Esophagus muscularis mucosa (tissue), 4 donors: ENCODE measurements at regions of chr14 and their contacts with region 1.

Region 1: GRCh38 chr14:100375963-100376735 is 53.0 kb downstream of the SLC25A47 start:
- DNase-seq: peak; percentile 98
- H3K4me3 ChIP-seq: peak within 1 kb of the TSS; percentile 68 to 81 (median 78)
- H3K27ac ChIP-seq: peak within 1 kb of the TSS; percentile 89 to 93 (median 90)
- H3K4me1 ChIP-seq: peaks cover 15 to 46% (median 37%) of the 10 kb centered on the region in 4 donors
- H3K27me3 ChIP-seq: no peaks in the 10 kb centered on the region
- CTCF ChIP-seq: peak in 1 of 3 experiments; percentile 33
- EP300 ChIP-seq: no peak
- POLR2A ChIP-seq: peak; percentile 43

Region 2: DNA sequence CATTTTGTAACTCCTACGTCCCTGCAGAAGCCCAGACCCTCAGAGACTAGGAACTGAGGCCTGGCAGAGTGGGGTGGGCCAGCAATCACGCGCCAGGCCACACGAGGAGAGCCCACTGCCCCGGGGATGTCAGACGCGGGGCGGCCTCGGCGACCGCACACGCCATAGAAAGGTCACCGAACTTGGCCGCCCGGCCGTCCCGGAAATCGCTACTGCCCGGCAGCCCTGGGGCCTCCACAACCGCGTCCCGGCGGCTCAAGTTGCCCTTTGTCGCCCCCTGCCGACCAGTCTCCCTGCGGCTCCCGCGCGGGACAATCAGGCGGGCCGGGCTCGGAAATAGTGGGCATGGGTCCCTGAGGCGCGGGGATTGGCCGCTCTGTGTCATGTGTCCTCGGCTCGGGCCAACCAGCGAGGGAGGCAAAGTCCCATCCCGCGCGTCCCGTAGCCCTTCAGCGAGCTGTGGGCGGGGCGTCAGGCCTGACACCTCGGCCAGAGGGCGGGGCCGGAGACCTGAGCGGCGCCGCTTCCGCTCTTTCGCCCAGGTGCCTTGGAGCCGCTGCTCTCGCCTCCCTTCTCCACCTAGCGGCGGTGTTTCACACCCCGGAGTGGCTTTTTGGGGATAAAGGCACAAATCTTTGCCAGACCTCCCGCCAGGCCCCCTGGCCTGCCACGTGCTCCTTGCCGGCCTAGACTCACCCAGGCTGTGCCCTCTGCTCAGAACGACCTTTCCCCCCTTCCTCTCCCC is 183.3 kb before region 1 on chr14:
- intact Hi-C with region 1: loop called (anchors 2 kb)
- DNase-seq: peak; percentile 100
- H3K4me3 ChIP-seq: peak overlapping the region; percentile 51 to 58 (median 53)
- H3K27ac ChIP-seq: peak overlapping the region; percentile 87 to 95 (median 90)
- H3K4me1 ChIP-seq: peaks cover 14 to 21% (median 19%) of the 10 kb centered on the region in 4 donors
- H3K27me3 ChIP-seq: no peaks in the 10 kb centered on the region
- CTCF ChIP-seq: peak; percentile 86 to 93 (median 87)
- EP300 ChIP-seq: no peak
- POLR2A ChIP-seq: peak; percentile 39

Region 3: DNA sequence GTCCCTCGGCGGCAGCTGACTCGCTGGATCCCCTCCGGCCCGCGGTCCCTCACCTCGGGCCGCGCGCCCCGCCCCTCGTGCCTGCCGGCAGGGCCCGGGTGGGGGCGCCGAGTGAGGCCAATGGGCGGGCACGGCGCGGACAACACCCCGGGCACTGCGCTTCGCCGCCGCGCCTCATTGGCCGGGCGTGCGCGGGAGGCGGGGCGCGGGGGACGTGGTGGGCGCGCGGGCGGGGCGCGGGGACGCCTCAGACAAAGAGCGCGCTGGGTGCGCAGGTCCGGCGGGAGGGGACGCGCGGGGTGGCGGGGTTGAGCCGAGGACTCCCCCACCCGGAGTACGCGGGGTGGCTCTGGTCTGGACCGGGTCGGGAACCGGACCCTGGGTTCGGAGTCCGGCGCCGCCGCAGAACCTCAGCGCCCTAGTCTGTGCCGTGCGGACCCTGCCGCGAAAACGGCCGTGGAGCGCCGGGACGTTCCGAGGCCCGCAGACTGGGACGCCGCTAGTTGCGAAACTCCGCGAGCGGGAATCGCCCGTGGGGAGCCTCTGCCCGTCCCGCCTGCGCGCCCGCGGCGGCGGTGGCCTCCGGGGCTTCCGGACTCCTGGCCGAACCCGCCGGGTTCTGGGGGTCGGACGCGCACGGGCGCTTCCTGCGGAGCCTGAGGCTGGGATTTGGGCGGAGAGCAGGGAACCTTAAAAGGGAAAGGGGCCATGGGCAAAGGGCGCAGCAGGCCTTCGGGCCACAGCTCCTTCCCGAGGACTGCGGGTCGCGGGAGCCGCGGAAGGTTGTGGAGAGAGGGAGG is 69.5 kb before region 1 on chr14 and contains the start of gene SLC25A29:
- intact Hi-C with region 1: loop called (anchors 5 kb)
- DNase-seq: peak; percentile 95
- H3K4me3 ChIP-seq: peak within 1 kb of the TSS; percentile 82 to 98 (median 88)
- H3K27ac ChIP-seq: peak within 1 kb of the TSS; percentile 89 to 93 (median 89)
- H3K4me1 ChIP-seq: peaks cover 31 to 73% (median 66%) of the 10 kb centered on the region in 4 donors
- H3K27me3 ChIP-seq: no peaks in the 10 kb centered on the region
- CTCF ChIP-seq: no peak
- EP300 ChIP-seq: no peak
- POLR2A ChIP-seq: peak; percentile 52
- total RNA-seq, gene SLC25A29: 37.4 to 63.0 (median 49.2) TPM

Region 4: GRCh38 chr14:100654814-100655740 is 278.9 kb after region 1 on chr14:
- intact Hi-C with region 1: no loop called
- DNase-seq: no peak
- H3K4me3 ChIP-seq: peak overlapping the region in 2 of 4 donors; percentile 23 to 32
- H3K27ac ChIP-seq: no peak overlapping the region
- H3K4me1 ChIP-seq: peaks cover 0 to 8% (median 6%) of the 10 kb centered on the region in 4 donors
- H3K27me3 ChIP-seq: peaks cover 0 to 40% (median 12%) of the 10 kb centered on the region in 4 donors
- CTCF ChIP-seq: peak; percentile 38 to 67 (median 43)
- EP300 ChIP-seq: no peak
- POLR2A ChIP-seq: no peak

Region 5: DNA sequence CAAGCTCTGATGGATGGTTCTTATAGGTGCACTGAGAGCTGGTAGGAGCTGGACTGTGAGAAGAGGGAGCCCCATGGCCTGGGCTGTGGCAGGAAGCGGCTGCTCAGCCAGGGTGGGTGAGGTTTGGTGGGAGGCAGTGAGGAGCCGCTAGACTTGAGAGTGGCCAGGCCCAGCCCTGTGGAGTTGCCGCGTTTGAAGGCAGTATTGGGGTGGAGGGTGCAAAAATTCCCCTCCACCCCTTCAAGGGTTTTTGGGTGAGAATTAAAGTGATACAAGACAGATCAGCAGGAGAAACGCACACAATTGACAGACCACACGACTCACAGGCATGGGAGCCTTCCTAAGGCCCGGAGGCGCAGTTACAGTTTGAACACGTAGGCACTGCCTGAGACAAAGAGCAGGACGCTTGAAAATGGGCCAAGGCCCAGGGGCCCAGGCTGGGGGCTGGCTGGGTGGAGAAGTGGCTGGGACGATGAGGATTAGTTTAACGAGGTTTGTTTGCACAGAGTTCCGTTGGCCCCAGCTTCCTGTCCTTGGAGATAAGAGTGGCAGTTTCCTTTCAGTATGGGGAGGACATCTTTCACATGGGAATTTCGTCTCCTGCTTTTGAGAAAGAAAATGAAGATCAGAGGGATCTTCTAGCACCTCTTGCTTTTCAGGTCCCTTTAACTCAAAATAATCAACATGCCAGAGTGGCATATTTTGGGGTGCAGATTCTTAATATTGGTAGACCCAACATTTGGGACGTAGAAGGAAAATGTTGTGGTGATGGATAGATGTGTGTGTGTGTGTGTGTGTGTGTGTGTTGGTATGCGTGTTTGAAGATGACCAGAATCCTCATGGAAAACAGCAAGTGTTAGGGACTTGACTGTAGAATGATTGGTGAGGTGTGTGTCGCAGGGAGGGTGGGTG is 395.0 kb after region 1 on chr14:
- intact Hi-C with region 1: no loop called
- DNase-seq: no peak
- H3K4me3 ChIP-seq: no peak overlapping the region
- H3K27ac ChIP-seq: no peak overlapping the region
- H3K4me1 ChIP-seq: no peaks in the 10 kb centered on the region
- H3K27me3 ChIP-seq: peaks cover 0 to 32% (median 0%) of the 10 kb centered on the region in 4 donors
- CTCF ChIP-seq: no peak
- EP300 ChIP-seq: no peak
- POLR2A ChIP-seq: no peak